IMR-90 (cell line): ENCODE measurements at regions of chr5 and their contacts with region 1.

Region 1: DNA sequence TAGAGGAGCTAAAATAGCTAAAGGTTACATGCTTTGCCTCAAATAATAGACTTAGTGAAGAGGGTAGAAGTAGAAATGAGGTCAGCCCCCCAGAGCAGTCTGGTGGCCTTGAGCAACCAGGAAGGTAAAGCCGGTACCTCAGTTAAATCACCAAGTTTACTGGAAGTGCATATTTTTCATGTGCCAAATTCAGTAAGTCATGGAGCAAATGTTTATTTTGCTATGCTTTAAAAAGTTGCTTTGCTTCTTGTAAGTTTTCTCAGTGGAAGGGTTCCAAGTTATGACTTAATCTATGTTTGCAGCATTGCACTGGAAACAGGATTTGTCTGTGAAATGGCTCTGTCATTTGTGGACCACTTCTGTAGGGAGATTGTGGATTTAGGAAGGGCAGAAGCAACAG is 256.7 kb downstream of the ARRDC3 start:
- DNase-seq: peak; percentile 94
- ATAC-seq: peak; percentile 65
- H3K4me3 ChIP-seq: no peak overlapping the region
- H3K27ac ChIP-seq: peak overlapping the region; percentile 53; the same call in 1 of the 2 replicates
- H3K4me1 ChIP-seq: peaks cover 15% of the 10 kb centered on the region
- H3K27me3 ChIP-seq: no peaks in the 10 kb centered on the region
- CTCF ChIP-seq: no peak
- POLR2A ChIP-seq: no peak
- RAD21 ChIP-seq: no peak

Region 2: GRCh38 chr5:90888511-90889324 is 237.7 kb before region 1 on chr5:
- CTCF ChIA-PET with region 1: no interaction called
- POLR2A ChIA-PET with region 1: no interaction called
- dilution Hi-C with region 1: no loop called
- in situ Hi-C with region 1: no loop called
- intact Hi-C with region 1: no loop called
- DNase-seq: peak; percentile 35
- ATAC-seq: no peak
- H3K4me3 ChIP-seq: no peak overlapping the region
- H3K27ac ChIP-seq: no peak overlapping the region
- H3K4me1 ChIP-seq: no peaks in the 10 kb centered on the region
- H3K27me3 ChIP-seq: peaks cover 2% of the 10 kb centered on the region
- CTCF ChIP-seq: no peak
- POLR2A ChIP-seq: no peak
- RAD21 ChIP-seq: no peak

Region 3: DNA sequence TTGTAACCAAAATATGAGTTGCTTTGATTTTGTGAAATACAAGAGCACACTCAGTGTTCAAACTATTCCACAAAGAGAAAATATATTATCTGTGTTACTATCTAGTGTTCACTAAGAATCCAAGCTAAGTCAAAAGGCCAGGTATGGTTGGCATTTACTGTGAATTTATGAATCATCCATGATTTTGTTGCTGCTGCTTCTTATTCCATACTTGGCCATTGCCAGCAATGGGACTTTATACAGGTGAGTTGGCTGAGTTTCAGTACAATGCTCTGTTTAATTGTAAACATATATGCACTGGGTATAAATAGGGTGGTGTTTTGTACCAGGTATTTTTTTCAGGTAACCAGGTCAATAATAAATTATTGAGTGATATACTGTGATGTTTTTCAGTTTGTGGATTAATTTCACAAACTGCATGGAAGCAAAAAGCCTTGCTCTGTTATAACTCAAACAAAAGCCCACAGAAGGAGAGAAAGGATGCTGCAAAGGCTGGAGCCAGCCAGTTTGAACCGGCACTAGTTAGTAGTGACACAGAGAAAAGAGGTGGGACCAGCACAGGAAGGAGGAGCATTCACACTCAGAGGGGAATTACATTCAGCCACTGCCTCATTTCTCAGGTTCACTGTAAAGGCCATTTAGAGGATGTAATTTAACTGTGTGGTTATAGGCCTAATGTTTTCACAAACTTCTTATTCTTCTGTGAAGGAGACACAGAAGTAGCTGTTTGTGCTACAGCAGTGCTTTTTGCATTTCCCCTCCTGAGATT is 186.0 kb before region 1 on chr5:
- CTCF ChIA-PET with region 1: no interaction called
- POLR2A ChIA-PET with region 1: no interaction called
- dilution Hi-C with region 1: no loop called
- in situ Hi-C with region 1: no loop called
- intact Hi-C with region 1: no loop called
- DNase-seq: peak; percentile 60
- ATAC-seq: peak; percentile 81
- H3K4me3 ChIP-seq: no peak overlapping the region
- H3K27ac ChIP-seq: no peak overlapping the region
- H3K4me1 ChIP-seq: peaks cover 10% of the 10 kb centered on the region
- H3K27me3 ChIP-seq: no peaks in the 10 kb centered on the region
- CTCF ChIP-seq: no peak
- POLR2A ChIP-seq: no peak
- RAD21 ChIP-seq: no peak

Region 4: GRCh38 chr5:91176288-91177016 is 50.0 kb after region 1 on chr5:
- CTCF ChIA-PET with region 1: interaction called, 3 read pairs
- POLR2A ChIA-PET with region 1: no interaction called
- dilution Hi-C with region 1: no loop called
- in situ Hi-C with region 1: no loop called
- intact Hi-C with region 1: loop called (anchors 5 kb)
- DNase-seq: peak; percentile 60
- ATAC-seq: peak; percentile 94
- H3K4me3 ChIP-seq: no peak overlapping the region
- H3K27ac ChIP-seq: no peak overlapping the region
- H3K4me1 ChIP-seq: peaks cover 12% of the 10 kb centered on the region
- H3K27me3 ChIP-seq: no peaks in the 10 kb centered on the region
- CTCF ChIP-seq: no peak
- POLR2A ChIP-seq: no peak
- RAD21 ChIP-seq: no peak